Astrocyte of the cerebellum (primary cell): ENCODE measurements at regions of chr17 and their contacts with region 1.

Region 1: DNA sequence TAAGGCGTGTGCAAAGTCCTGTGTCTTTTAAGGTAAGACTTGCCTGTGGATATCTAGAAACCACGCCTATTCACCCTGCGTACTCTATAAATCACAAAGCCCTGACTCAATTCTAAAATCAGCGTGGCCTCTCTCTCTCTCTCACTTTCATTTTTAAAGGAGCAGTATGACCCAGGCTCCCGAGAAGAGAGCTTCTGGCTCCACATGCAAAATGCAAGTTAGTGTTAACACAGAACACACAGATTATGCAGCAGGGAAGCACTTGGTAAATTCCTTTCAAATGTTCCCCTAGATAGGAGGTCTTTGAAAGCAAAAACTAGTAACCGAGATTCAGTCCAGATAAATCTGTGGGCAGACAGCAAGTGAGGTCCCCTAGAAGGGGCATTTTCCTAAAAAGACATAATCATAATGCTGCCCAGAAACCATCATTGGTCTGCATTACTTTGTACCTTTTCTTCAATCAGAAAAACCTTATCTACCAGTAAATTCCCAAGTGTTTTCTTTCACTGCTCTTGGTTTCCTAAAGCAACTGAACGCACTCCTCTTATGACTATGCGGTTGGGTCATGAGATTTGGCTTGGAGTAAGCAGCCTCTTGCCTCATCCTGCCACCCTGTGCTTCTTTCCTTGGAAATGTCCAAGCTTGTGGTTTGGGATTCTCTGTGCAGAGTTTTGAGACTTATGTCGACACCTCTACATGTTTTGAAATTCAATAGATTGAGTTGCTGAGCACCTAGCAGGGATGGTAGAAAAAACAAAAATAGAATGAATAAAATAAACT is 31.7 kb upstream of the KCNJ2 start:
- DNase-seq: peak; percentile 88
- H3K4me3 ChIP-seq: peak overlapping the region; percentile 25
- CTCF ChIP-seq: no peak

Region 2: DNA sequence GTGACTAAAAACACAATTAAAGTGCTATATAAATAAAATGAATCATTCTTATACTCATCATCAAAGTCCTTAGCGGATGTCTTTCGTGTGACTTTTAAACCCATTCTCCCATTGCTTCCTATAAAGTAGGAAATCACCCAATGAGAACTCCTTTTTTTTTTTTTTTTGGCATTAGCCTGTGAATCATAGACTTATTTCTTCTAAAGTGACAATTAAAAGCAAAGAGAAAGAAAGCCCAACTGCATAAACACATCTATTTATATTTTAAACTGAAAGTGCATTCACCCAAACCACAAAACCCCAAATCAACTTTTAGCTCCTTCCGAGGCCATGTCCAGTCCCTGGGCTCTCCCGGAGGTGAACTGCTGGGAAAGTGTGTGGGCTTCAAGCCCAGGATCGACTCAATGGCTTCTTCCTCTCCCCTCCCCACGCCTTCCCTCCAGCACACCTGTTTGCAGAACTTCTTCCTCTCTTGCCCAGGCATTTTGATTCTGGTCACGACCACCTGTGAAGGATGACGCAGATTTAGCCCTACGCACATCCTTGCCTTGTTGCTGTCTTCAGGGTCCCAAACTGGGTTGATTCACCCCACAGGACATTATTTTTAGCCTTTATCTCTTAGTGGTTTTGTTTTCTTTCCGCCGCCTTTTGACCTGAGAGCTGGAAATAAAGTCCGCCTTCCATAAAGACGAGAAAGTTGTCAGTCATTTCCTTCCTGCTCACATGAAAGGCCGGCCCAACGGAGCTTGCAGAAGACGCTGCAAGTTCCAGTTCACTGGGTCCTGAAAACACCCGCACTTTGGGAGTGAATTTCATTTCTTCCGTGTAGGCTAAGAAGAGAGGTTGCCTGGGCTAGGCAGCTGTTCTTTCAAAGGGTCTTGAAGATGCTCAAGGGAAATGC is 556.3 kb before region 1 on chr17:
- in situ Hi-C with region 1: loop called (anchors 25 kb)
- DNase-seq: peak; percentile 58
- H3K4me3 ChIP-seq: no peak overlapping the region
- CTCF ChIP-seq: no peak